HEK293 (cell line): ENCODE measurements at regions of chr13 and their contacts with region 1.

Region 1: DNA sequence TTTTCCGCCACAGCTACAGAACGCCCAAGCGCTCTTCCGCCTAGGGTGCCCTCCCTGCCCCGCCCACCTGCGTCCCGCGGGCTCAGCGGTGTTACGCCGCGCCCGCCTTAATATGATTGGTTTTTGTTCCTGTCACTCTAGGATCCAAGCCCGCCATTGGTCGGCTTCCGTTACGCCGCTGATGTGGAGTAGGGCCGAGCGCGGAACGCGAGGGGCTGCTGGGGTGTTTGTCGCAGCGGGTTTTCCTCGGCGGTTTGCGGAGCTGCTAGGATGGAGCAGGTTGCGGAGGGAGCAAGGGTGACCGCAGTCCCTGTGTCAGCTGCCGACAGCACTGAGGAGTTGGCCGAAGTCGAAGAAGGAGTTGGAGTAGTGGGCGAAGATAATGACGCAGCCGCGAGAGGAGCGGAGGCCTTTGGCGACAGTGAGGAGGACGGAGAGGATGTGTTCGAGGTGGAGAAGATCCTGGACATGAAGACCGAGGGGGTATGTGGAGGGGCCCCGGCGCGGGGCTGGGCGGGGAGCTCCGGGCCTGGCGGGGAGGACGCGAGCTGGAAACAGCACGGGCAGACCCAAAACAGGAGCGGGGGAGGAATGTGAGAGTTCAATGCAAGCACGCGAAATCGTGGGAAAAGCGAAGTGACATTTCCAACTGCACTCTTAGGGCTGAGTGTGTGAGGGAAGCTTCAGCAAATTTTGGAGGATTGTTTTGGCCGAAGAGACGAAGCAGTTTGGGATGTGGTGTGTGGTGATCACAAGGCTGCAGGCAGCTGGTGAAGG is at the start of gene MPHOSPH8:
- H3K4me3 ChIP-seq: peak within 1 kb of the TSS; percentile 85
- H3K27ac ChIP-seq: peak within 1 kb of the TSS; percentile 54; the same call in 1 of the 2 replicates
- H3K4me1 ChIP-seq: peaks cover 2% of the 10 kb centered on the region; the same call in 1 of the 2 replicates
- CTCF ChIP-seq: no peak

Region 2: DNA sequence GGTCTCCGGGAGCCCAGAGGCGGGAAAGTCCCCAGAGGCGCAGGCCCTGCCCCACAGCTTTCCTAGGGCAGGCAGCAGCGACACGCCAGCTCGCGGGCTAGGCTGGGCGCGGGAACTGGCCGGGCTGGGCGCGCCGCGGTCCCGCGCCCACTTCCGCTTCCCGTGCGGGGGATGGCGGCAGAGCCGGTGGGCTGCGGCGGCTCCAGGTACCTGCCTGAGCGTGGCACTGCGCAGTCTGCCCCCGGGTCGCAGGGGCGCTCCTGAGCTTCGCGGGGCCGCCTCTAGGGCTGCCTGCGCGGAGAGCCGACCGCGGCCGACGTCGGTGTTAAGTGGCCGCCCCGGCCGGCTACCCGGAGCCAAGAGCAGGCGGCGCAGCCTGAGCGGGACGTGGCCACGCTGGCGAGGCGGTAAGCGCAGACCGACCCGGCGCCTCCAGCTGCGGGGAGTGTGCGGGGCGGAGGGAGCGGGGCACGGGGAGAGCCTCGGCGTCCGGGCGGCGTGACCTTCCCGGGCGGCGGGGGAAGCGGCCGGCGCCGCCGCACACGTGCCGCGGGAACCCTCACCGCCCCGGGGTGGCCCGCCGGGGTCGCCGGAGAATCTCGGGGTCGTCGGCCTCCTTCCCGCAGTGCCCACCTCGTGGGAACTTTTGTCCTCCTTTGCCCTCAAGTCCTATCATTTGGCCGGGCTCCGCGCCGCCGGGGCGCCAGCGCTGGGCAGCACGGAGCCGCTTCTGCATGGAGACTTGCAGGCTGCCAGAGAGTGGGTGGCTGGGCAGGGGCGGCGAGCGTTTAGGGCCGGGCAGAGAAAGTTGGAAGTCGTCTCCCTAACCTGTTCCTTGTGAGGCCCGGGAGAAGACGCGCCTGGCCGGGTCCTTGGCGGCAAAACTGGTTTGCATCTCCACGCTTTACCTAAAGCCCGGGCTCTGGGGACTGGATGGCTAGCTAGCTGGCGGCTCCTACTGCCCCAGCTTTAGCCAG is 31.6 kb before region 1 on chr13:
- CTCF ChIA-PET with region 1: no interaction called
- POLR2A ChIA-PET with region 1: interaction called, 10 read pairs
- H3K4me3 ChIP-seq: peak overlapping the region; percentile 55
- H3K27ac ChIP-seq: peak overlapping the region; percentile 60; the same call in 1 of the 2 replicates
- H3K4me1 ChIP-seq: no peaks in the 10 kb centered on the region
- CTCF ChIP-seq: no peak

Region 3: DNA sequence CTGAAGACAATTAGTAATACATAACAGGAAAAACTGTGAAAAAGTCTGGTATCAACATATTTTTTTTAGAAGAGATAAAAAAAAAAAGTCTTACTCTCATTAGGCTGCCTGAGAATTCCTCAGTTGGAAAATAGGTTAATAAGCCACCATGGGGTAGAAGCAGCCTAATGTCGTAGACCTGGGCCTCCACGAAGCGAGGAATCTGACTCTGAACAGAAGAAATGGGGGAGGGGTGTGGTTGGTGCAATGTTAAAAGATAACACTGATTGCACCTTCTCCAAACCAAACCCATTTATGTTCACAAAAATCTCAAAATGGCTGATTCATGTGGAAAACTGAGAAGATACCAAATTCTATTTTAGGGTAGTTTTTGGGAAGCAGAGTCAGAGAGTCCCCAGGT is 62.2 kb after region 1 on chr13:
- CTCF ChIA-PET with region 1: no interaction called
- POLR2A ChIA-PET with region 1: no interaction called
- H3K4me3 ChIP-seq: no peak overlapping the region
- H3K27ac ChIP-seq: no peak overlapping the region
- H3K4me1 ChIP-seq: no peaks in the 10 kb centered on the region
- CTCF ChIP-seq: no peak

Region 4: GRCh38 chr13:19863323-19864023 is 229.8 kb after region 1 on chr13 and contains the start of gene ZMYM5:
- CTCF ChIA-PET with region 1: no interaction called
- POLR2A ChIA-PET with region 1: interaction called, 13 read pairs
- H3K4me3 ChIP-seq: peak within 1 kb of the TSS; percentile 61
- H3K27ac ChIP-seq: peak within 1 kb of the TSS; percentile 94
- H3K4me1 ChIP-seq: 0 out of 2 replicates have a peak, but pooled peaks cover 3% of the 10 kb centered on the region
- CTCF ChIP-seq: no peak; the same call in 1 of the 2 replicates